Mammary epithelial cell (primary cell): ENCODE measurements at regions of chr3 and their contacts with region 1.

Region 1: GRCh38 chr3:46629551-46630517 is 17.5 kb downstream of the FAM240A start:
- DNase-seq: peak; percentile 71
- H3K4me3 ChIP-seq: peak overlapping the region in 1 of 3 experiments; percentile 13
- H3K27ac ChIP-seq: no peak overlapping the region
- H3K4me1 ChIP-seq: peaks cover 9% of the 10 kb centered on the region
- H3K27me3 ChIP-seq: no peaks in the 10 kb centered on the region
- CTCF ChIP-seq: peak; percentile 88 to 99

Region 2: DNA sequence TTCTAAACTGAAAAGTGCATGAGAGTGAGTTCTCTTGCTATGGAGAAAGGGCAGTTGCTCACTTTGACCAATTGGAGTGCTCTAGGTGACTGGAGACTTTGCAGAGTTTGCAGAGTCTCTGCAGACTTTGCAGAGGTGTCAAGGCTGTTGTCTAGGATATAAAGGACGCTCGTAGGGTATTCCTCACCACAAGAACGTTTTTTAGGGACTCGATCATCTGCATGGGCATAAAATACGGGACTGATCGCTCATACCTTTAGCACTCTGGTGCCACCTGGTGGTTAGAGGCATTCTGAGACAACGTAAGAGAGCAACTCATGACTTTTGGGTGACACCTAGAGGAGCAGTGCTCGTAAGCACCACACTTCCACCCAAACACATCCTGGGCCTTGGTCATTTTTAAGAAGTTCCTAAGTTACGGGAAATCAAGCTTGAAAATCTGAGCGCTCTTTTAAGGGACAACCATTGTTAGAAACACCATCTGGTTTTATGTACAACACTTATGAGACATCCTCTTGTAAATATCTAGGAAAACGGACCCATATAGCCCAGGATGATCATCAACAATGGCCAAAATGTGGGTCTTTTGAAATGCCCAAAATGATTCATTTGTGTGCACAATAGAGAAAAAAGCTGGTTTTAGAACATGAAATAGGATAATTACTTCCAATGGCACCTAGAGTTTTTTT is 551.0 kb before region 1 on chr3:
- CTCF ChIA-PET with region 1: no interaction called
- dilution Hi-C with region 1: no loop called
- in situ Hi-C with region 1: no loop called
- intact Hi-C with region 1: no loop called
- DNase-seq: peak; percentile 80
- H3K4me3 ChIP-seq: no peak overlapping the region
- H3K27ac ChIP-seq: no peak overlapping the region
- H3K4me1 ChIP-seq: peaks cover 26% of the 10 kb centered on the region
- H3K27me3 ChIP-seq: no peaks in the 10 kb centered on the region
- CTCF ChIP-seq: peak; percentile 98

Region 3: GRCh38 chr3:46538803-46539442 is 90.9 kb before region 1 on chr3:
- CTCF ChIA-PET with region 1: no interaction called
- dilution Hi-C with region 1: no loop called
- in situ Hi-C with region 1: no loop called
- intact Hi-C with region 1: no loop called
- DNase-seq: no peak
- H3K4me3 ChIP-seq: no peak overlapping the region
- H3K27ac ChIP-seq: no peak overlapping the region
- H3K4me1 ChIP-seq: no peaks in the 10 kb centered on the region
- H3K27me3 ChIP-seq: no peaks in the 10 kb centered on the region
- CTCF ChIP-seq: no peak

Region 4: DNA sequence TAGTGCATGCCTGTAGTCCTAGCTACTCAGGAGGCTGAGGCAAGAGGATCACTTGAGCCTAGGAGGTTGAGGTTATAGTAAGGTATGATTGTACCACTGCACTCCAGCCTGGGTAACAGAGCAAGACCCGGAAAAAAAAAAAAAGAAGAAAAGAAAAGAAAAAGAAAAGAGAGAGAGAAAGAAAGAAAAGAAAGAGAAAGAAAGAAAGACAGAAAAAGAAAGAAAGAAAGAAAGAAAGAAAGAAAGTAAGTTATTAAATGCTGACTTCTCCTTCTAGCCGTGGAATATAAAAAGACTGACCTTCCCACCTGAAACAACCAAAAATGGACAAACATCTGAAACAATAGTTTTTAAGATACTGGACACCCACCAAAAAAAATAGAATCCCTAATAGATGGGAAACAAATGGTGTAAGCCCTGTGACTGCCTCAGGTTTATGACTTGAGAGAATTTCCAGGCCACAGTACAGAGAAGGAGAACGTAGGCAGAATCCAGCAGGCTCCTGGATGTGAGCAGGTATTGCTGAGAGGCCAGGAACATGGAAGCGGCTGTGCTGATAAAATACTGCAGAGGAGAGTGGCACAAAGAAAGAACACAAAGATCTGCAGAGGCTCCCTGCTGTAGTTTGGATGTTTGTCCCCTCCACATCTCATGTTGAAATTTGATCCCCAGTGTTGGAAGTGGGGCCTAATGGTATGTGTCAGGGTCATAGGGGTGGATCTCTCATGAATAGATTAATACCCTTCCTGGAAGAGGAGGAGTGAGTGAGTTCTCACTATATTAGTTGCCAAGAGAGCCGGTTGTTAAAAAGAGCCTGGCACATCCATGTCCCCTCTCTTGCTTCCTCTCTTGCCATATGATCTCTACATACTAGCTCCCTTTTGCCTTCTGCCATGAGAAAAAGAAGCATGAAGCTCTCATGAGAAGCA is 129.7 kb after region 1 on chr3:
- CTCF ChIA-PET with region 1: no interaction called
- dilution Hi-C with region 1: loop called (anchors 25 kb)
- in situ Hi-C with region 1: no loop called
- intact Hi-C with region 1: no loop called
- DNase-seq: no peak
- H3K4me3 ChIP-seq: no peak overlapping the region
- H3K27ac ChIP-seq: no peak overlapping the region
- H3K4me1 ChIP-seq: peaks cover 6% of the 10 kb centered on the region
- H3K27me3 ChIP-seq: no peaks in the 10 kb centered on the region
- CTCF ChIP-seq: no peak